ENCODE measurements at regions of chr11 and their contacts with region 1.

Region 1: GRCh38 chr11:66282468-66283386 is 4.8 kb downstream of the CNIH2 start:
- DNase-seq: peak; percentile 95 to 100 (median 100)
- ATAC-seq: peak; percentile 80 to 89 (median 86)
- H3K4me3 ChIP-seq: no peak overlapping the region
- H3K4me3 Mint-ChIP-seq: peak overlapping the region in 1 of 3 donors; percentile 54
- H3K27ac ChIP-seq: peak overlapping the region; percentile 50
- H3K27ac Mint-ChIP-seq: peak overlapping the region; percentile 19 to 66
- H3K4me1 ChIP-seq: peaks cover 2 to 45% of the 10 kb centered on the region in 2 experiments
- H3K4me1 Mint-ChIP-seq: peaks cover 38 to 48% (median 42%) of the 10 kb centered on the region in 3 donors
- H3K27me3 ChIP-seq: peaks cover 0 to 12% of the 10 kb centered on the region in 2 experiments
- H3K27me3 Mint-ChIP-seq: no peaks in the 10 kb centered on the region

Region 2: GRCh38 chr11:66159324-66159984 is 123.3 kb before region 1 on chr11:
- CTCF ChIA-PET with region 1: no interaction called
- POLR2A ChIA-PET with region 1: interaction called in 1 of 2 experiments, 16 read pairs
- DNase-seq: no peak
- ATAC-seq: no peak
- H3K4me3 ChIP-seq: no peak overlapping the region
- H3K4me3 Mint-ChIP-seq: no peak overlapping the region
- H3K27ac ChIP-seq: no peak overlapping the region
- H3K27ac Mint-ChIP-seq: peak overlapping the region in 1 of 2 donors; percentile 75
- H3K4me1 ChIP-seq: peaks cover 0 to 4% of the 10 kb centered on the region in 2 experiments
- H3K4me1 Mint-ChIP-seq: peaks cover 72 to 75% (median 74%) of the 10 kb centered on the region in 3 donors
- H3K27me3 ChIP-seq: no peaks in the 10 kb centered on the region
- H3K27me3 Mint-ChIP-seq: no peaks in the 10 kb centered on the region

Region 3: DNA sequence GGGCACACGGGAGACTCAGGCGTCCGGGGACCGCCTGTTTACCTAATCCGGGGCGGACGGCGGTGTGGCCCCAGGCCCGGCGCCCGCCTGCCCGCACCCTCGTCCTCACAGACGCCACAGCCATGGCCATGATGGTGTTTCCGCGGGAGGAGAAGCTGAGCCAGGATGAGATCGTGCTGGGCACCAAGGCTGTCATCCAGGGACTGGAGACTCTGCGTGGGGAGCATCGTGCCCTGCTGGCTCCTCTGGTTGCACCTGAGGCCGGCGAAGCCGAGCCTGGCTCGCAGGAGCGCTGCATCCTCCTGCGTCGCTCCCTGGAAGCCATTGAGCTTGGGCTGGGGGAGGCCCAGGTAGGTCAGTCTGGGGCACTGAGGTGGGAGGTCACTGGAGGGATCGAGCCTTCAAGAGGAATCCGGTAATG is 24.2 kb before region 1 on chr11:
- CTCF ChIA-PET with region 1: interaction called in 1 of 2 experiments, 5 read pairs
- POLR2A ChIA-PET with region 1: interaction called, 7 to 10 read pairs
- DNase-seq: no peak
- ATAC-seq: no peak
- H3K4me3 ChIP-seq: peak overlapping the region; percentile 85 to 89
- H3K4me3 Mint-ChIP-seq: peak overlapping the region; percentile 87 to 94 (median 93)
- H3K27ac ChIP-seq: peak overlapping the region; percentile 96
- H3K27ac Mint-ChIP-seq: peak overlapping the region; percentile 59 to 80
- H3K4me1 ChIP-seq: peaks cover 14 to 38% of the 10 kb centered on the region in 2 experiments
- H3K4me1 Mint-ChIP-seq: peaks cover 27 to 31% (median 28%) of the 10 kb centered on the region in 3 donors
- H3K27me3 ChIP-seq: no peaks in the 10 kb centered on the region
- H3K27me3 Mint-ChIP-seq: no peaks in the 10 kb centered on the region

Measured in T-cell (primary cell).